Gastrocnemius medialis (tissue), 4 donors: ENCODE measurements at regions of chr5 and their contacts with region 1.

Region 1: DNA sequence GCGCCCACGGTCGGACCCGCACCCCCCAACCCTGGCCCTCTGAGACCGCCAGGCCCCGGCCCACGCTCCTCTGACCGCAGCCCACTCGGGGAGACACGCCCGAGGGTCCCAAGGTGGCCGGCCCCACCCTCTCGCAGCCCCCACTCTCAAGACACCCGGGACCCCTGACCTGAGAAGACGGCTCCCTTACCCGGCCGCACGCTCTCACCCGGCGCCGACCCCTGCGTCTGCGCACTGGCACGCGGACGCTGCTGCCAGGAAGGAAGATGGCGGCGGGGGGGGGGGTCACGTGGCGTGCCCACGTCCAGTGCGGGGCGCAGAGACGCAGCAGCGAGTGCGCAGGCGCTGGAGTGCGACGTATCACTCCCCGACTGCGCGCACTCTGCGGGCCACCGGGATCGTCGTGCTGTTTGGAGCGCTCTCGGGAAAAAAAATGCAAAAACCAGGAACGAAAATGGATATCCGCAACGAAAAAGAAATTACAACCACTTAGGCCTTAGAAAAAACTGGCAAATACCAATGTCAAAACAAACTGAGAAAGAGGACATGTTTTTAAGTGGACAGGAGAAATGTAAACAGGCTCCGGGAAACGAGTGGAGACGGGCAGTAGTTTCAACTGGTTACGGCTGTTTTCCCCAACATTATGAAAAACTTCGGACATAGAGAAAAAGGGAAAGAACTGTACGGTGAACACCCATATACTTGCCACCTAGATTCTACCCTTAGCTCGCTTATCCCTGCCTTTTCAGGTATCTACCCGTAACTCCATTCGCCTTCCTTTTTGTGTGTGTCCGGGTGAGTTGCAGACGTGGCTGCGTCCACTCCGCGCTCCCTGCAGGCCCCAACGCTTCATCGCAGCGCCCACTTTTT is at the start of gene MRPL36:
- DNase-seq: peak; percentile 88 to 91
- ATAC-seq: peak; percentile 79 to 83
- H3K4me3 ChIP-seq: peak within 1 kb of the TSS; percentile 84 to 99 (median 98)
- H3K27ac ChIP-seq: peak within 1 kb of the TSS; percentile 90 to 98 (median 92)
- H3K4me1 ChIP-seq: peaks cover 18 to 34% of the 10 kb centered on the region in 2 donors
- H3K27me3 ChIP-seq: no peaks in the 10 kb centered on the region
- CTCF ChIP-seq: no peak
- POLR2A ChIP-seq: peak; percentile 88 to 89
- total RNA-seq, gene MRPL36: 67.8 to 106 (median 75.3) TPM

Region 2: GRCh38 chr5:1883120-1883924 is 83.5 kb after region 1 on chr5:
- in situ Hi-C with region 1: no loop called
- intact Hi-C with region 1: loop called (anchors 1 kb)
- DNase-seq: no peak
- ATAC-seq: peak in 1 of 2 donors; percentile 84
- H3K4me3 ChIP-seq: peak overlapping the region; percentile 27 to 58 (median 51)
- H3K27ac ChIP-seq: peak overlapping the region in 1 of 4 donors; percentile 41
- H3K4me1 ChIP-seq: peaks cover 0 to 4% of the 10 kb centered on the region in 2 donors
- H3K27me3 ChIP-seq: peaks cover 70 to 90% (median 85%) of the 10 kb centered on the region in 3 donors
- CTCF ChIP-seq: peak in 1 of 5 experiments; percentile 15
- POLR2A ChIP-seq: peak; percentile 25

Region 3: DNA sequence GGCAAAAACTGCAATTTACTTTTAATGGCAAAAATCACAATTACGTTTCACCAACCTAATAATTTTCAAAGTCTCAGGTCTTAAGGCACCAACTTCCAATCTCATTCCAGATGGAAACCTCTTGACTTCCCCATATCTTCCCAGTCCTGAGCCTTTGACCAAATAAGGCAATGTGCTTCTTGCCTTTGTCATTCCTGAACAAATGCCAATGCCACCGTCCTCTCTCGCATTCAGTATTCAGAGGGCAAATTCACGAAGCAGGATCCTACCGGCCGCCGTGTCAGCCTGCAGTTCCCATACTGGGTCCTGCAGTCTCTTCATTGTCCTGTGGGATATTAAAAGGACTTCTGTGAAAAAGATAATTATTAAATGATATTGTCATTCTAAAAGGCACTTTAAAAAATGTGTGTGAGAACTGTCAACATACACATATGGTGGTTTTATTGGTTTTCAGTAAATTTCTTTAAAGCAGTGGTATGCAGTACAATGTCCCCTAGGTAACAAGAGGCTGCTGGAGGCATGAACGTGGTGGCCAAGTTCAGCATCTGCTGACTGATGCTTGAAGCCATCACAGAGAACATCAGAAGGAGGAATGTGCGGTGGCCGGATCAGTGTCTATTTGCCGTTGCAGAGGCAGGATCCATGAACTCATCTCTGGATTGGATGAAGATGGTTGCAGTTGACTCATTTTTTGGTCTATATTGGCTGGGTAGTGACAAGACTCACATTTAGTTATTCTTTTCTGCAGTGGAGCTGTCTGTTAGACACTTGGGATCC is 184.3 kb after region 1 on chr5:
- in situ Hi-C with region 1: no loop called
- intact Hi-C with region 1: no loop called
- DNase-seq: no peak
- ATAC-seq: no peak
- H3K4me3 ChIP-seq: no peak overlapping the region
- H3K27ac ChIP-seq: no peak overlapping the region
- H3K4me1 ChIP-seq: no peaks in the 10 kb centered on the region
- H3K27me3 ChIP-seq: no peaks in the 10 kb centered on the region
- CTCF ChIP-seq: no peak
- POLR2A ChIP-seq: no peak

Region 4: DNA sequence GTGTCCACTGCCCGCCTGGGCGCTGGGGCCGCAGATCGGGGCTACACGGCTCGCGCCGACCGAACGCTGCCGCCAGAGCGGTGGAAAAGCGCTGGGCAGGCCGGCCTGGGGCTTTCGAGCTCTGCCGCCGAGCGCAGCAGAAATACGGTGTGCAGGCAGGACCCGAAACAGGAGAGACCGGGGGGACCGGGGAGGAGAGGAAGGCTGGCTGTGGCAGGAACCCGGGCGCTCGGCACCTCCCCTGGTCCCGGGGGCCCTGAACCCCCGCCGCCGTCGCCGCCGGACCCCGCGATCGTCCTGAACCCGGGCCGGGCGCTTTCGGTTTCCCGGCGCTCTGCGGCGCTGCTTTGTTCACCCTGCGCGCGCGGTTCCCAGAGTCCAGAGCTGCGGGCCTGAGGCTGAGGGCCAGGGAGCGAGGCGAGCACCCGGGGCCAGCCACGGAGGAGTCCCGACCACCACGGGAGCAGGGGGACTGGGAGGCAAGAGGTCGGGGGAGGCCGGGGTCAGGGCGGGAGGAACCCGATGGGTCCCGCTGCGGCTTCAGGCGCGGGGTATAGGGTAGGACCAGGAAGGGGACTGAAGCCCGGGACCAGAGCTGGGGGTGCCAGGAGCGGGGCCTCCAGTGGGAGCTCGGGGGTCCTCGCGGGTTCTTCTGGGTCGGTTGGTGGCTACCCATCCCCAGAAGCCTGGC is 939.7 kb after region 1 on chr5:
- in situ Hi-C with region 1: no loop called
- intact Hi-C with region 1: no loop called
- DNase-seq: no peak
- ATAC-seq: no peak
- H3K4me3 ChIP-seq: peak overlapping the region; percentile 33 to 46 (median 41)
- H3K27ac ChIP-seq: no peak overlapping the region
- H3K4me1 ChIP-seq: no peaks in the 10 kb centered on the region
- H3K27me3 ChIP-seq: peaks cover 51 to 66% (median 60%) of the 10 kb centered on the region in 3 donors
- CTCF ChIP-seq: no peak
- POLR2A ChIP-seq: no peak